ENCODE measurements at regions of chr11 and their contacts with region 1.

Region 1: DNA sequence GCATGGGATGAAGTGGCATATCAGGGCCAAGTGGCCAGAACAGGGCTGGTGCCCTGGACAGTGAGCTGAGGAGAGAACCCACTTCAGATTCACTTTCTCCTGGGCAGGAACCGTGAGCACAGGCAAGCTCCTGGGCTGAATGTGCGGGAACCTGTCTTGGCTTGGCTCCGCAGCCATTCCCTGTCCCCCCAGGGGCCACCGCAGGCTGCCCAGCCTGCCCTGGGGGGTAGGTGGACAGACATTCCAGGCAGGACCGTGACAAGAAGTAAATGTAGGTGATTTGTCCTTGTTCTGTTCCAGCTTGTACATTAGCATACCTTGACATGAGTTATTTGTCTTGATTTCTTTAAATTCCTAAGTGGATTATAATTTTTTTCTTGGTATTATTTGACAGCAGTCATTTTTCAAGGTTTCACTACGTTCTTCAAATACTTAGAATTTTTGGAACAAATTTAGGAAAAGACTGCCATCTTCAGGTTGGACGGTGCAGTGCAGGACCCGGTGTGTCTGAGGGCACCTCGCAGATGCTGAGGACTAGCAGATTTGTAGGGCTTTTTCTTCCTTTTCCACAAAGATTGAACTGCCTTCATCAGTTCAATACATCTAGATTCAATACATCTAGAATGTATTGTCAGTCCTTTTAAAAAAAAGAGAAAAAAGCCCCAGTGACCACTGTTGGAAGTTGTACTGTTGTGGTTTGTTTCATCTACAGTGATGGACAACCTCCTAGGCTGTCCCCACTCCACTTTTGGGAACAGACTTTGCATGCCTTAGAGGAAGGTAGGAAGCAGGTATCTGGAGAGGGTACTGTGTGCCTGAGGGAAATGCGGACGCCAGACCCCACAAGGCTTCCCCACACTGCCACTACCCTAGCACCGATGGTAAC is 115.1 kb upstream of the RASSF10 start:
- DNase-seq: peak; percentile 89
- ATAC-seq: peak; percentile 63

Region 2: GRCh38 chr11:12329797-12330196 is 564.2 kb before region 1 on chr11:
- intact Hi-C with region 1: loop called (anchors 5 kb)
- DNase-seq: no peak
- ATAC-seq: no peak

Region 3: DNA sequence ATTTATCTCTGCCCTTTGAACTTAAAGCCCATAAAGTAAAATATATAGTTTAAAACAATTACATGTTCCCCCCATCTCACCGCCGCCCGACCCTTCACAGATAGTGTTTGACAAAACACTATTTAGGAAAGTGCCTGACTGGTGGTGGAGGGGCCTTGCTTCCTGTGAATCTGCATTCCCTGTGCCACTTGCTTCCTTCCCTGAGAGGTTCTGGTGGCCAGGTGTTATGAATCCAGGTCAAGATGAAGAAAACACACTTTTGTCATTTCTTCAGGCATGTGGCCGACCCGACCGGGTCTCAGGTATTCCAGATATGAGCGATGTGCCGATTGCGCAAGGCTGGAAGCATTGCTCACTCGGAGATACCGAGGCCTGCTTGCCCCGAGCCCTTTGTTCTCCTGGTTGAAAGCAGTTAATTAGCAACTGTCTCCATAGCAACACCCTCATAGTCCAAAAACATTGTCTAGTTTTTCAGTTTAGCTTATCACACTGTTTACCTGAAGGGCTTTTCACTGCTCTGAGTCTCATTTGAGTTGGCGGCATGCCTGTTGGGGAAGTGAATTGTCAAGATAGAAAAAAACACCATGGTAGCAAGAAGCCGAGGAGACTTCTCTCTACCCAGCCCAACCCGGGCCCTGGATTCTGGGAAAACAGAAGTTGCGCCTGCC is 91.5 kb before region 1 on chr11:
- intact Hi-C with region 1: no loop called
- DNase-seq: no peak
- ATAC-seq: peak; percentile 58

Measured in sciatic nerve (tissue), 2 donors.